MCF 10A (cell line): ENCODE measurements at regions of chr1 and their contacts with region 1.

Region 1: DNA sequence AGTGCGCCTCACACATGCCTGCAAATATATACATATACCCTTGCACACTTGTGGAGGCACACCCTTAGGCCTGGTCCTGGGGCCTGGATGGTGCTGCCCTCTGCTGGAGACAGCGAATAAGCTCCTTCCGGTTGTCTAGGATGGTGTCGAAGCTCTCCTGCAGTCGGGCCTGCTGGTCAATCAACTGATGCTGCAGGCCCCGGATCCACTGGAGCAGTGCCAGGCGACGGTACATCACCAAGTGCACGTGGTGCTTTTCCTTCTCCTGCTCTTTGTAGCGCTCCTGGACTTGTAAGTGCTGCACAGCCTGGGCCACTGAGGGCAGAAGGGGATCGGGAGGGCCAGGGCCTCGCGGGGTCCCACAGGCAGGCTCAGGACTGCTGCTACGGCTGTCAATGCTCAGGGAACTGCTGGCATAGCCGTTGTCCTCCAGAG is 3.1 kb downstream of the C1orf216 start:
- DNase-seq: peak; percentile 82
- H3K4me3 Mint-ChIP-seq: no peak overlapping the region
- H3K27ac Mint-ChIP-seq: no peak overlapping the region
- H3K4me1 Mint-ChIP-seq: peaks cover 37% of the 10 kb centered on the region
- H3K27me3 Mint-ChIP-seq: no peaks in the 10 kb centered on the region
- CTCF ChIP-seq: peak; percentile 80

Region 2: GRCh38 chr1:35564037-35564883 is 151.3 kb before region 1 on chr1:
- CTCF ChIA-PET with region 1: interaction called, 29 read pairs
- POLR2A ChIA-PET with region 1: interaction called, 4 read pairs
- intact Hi-C with region 1: loop called (anchors 1 kb)
- DNase-seq: peak; percentile 90
- H3K4me3 Mint-ChIP-seq: no peak overlapping the region
- H3K27ac Mint-ChIP-seq: no peak overlapping the region
- H3K4me1 Mint-ChIP-seq: peaks cover 32% of the 10 kb centered on the region
- H3K27me3 Mint-ChIP-seq: no peaks in the 10 kb centered on the region
- CTCF ChIP-seq: peak; percentile 79

Region 3: DNA sequence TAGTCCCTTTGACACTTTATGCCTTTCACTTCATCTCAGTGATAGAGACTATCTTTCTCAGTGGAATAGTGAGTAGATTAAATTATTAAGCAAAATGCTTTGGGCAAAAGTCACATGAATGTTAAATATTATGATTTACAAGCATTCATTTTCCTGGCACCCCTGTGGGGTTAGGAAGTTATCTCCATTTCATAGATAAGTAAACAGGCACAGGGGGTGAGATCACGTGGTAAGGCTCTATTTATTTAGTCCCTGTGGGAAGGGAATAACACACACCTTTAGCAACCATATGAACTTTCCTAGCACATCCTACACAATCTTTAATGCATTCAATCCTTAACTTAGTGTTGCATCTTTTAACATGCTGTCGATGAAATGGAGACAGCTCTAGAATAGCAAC is 86.5 kb before region 1 on chr1:
- CTCF ChIA-PET with region 1: interaction called, 15 read pairs
- POLR2A ChIA-PET with region 1: interaction called, 5 read pairs
- intact Hi-C with region 1: no loop called
- DNase-seq: no peak
- H3K4me3 Mint-ChIP-seq: no peak overlapping the region
- H3K27ac Mint-ChIP-seq: no peak overlapping the region
- H3K4me1 Mint-ChIP-seq: no peaks in the 10 kb centered on the region
- H3K27me3 Mint-ChIP-seq: no peaks in the 10 kb centered on the region
- CTCF ChIP-seq: no peak

Region 4: DNA sequence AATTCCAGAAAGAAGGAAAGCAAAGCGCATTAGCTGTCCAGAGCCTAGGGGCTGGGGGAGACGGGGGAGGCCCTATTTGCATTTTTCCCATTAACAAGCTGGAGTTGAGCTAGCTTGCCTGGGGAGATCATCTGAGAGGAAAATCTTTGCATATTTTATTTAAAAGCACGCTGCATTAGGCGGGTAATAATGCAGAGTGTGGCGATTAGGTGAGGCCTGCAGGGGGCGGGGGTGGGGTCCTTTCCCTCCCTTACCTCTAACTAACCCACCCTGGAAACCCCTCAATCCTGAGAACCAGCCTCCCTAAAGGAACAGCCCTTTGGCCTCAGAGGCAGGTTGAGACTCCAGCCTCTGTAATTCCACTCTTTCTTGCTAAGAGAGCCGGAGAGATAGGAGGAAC is 13.1 kb before region 1 on chr1:
- CTCF ChIA-PET with region 1: interaction called, 25 read pairs
- POLR2A ChIA-PET with region 1: interaction called, 3 read pairs
- intact Hi-C with region 1: no loop called
- DNase-seq: no peak
- H3K4me3 Mint-ChIP-seq: no peak overlapping the region
- H3K27ac Mint-ChIP-seq: no peak overlapping the region
- H3K4me1 Mint-ChIP-seq: no peaks in the 10 kb centered on the region
- H3K27me3 Mint-ChIP-seq: peaks cover 83% of the 10 kb centered on the region
- CTCF ChIP-seq: no peak

Region 5: GRCh38 chr1:35769759-35770446 is 54.3 kb after region 1 on chr1 and contains the start of gene CLSPN:
- CTCF ChIA-PET with region 1: interaction called, 19 read pairs
- POLR2A ChIA-PET with region 1: no interaction called
- intact Hi-C with region 1: loop called (anchors 5 kb)
- DNase-seq: peak; percentile 96
- H3K4me3 Mint-ChIP-seq: peak within 1 kb of the TSS; percentile 99
- H3K27ac Mint-ChIP-seq: peak within 1 kb of the TSS; percentile 69
- H3K4me1 Mint-ChIP-seq: no peaks in the 10 kb centered on the region
- H3K27me3 Mint-ChIP-seq: no peaks in the 10 kb centered on the region
- CTCF ChIP-seq: no peak
- total RNA-seq, gene CLSPN: 1.6 and 4.3 TPM in 2 replicates

Region 6: GRCh38 chr1:35788139-35788538 is 72.6 kb after region 1 on chr1:
- CTCF ChIA-PET with region 1: no interaction called
- POLR2A ChIA-PET with region 1: no interaction called
- intact Hi-C with region 1: no loop called
- DNase-seq: no peak
- H3K4me3 Mint-ChIP-seq: no peak overlapping the region
- H3K27ac Mint-ChIP-seq: no peak overlapping the region
- H3K4me1 Mint-ChIP-seq: no peaks in the 10 kb centered on the region
- H3K27me3 Mint-ChIP-seq: no peaks in the 10 kb centered on the region
- CTCF ChIP-seq: no peak

Region 7: DNA sequence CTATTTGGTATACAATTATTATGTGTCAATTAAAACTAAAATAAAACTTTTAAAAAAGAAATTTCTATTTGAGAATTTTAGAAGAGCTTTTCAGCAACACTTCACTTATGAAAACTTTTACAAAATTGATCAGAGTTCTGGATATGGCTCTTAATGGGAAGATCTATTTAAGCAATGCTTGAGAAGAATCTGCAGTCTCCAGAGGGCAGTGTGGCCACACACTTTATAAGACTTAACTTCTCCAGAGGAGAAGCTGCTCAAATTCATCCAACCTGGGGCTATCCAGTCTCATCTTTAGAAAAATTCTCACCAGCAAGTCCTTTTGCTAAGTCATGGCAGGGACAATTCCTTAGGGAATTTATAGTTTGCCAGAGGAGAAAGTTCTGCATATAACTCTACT is 142.2 kb after region 1 on chr1:
- CTCF ChIA-PET with region 1: no interaction called
- POLR2A ChIA-PET with region 1: no interaction called
- intact Hi-C with region 1: no loop called
- DNase-seq: peak; percentile 18
- H3K4me3 Mint-ChIP-seq: no peak overlapping the region
- H3K27ac Mint-ChIP-seq: no peak overlapping the region
- H3K4me1 Mint-ChIP-seq: no peaks in the 10 kb centered on the region
- H3K27me3 Mint-ChIP-seq: no peaks in the 10 kb centered on the region
- CTCF ChIP-seq: no peak